ENCODE measurements at regions of chr16 and their contacts with region 1.

Region 1: GRCh38 chr16:47699106-47699505 is 238.0 kb downstream of the PHKB start:
- DNase-seq: no peak
- H3K4me3 ChIP-seq: no peak overlapping the region
- H3K27ac ChIP-seq: no peak overlapping the region
- H3K4me1 ChIP-seq: peaks cover 26% of the 10 kb centered on the region
- H3K27me3 ChIP-seq: no peaks in the 10 kb centered on the region
- CTCF ChIP-seq: no peak
- POLR2A ChIP-seq: no peak

Region 2: DNA sequence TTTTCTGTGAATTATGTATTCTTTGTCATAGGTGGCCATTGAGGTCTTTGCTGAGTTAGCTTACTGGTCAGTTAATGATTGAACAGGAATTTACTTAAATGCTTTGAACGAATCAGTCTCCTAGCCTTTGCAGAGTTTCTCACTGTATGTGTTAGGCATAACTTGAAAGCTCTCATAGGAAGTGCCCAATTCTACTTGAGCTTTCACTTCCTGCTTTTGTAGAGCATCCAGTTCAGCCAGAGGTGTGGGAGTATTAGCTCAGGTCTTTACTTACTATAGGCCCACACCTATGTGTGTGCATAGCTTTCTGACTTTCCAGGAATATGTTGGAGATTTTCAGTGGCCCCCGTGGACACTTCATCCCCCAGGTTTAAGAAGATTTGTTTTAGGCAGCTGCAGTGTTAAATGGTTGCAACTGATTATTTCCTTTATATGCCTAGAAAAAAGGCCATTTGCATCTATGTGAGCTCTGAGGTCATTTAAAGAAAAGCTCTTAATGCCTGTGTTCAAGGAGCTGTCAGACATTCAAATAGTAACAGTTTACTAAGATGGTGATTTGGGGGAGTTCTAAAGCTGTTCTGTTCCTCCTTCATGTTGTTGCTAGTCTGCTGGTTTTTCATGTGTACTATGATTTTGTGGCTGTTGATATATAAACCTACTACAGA is 175.6 kb before region 1 on chr16:
- CTCF ChIA-PET with region 1: no interaction called
- POLR2A ChIA-PET with region 1: no interaction called
- dilution Hi-C with region 1: no loop called
- intact Hi-C with region 1: loop called (anchors 5 kb)
- DNase-seq: peak; percentile 47
- H3K4me3 ChIP-seq: peak overlapping the region in 1 of 3 experiments; percentile 36
- H3K27ac ChIP-seq: peak overlapping the region; percentile 53
- H3K4me1 ChIP-seq: peaks cover 20% of the 10 kb centered on the region
- H3K27me3 ChIP-seq: no peaks in the 10 kb centered on the region
- CTCF ChIP-seq: no peak
- POLR2A ChIP-seq: no peak

Region 3: DNA sequence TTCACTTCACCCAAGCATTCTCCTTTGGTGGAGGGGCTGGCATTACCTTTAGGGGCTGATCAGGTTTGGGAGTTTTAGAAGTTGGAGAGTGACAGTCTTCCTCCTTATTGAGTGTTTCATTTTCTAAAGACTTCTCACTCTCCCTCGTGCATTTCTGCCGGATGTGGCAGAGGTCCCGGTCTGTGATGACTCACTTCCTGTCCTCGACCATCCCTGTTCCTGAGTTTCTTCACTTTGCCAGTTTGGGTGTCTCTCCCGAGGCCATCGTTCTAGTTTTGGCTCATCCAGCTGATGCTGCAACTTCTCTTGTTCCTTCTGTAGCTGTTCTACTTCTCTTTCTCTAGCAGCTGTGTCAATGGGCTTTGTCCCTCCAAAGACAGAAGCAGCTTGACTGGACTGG is 133.7 kb before region 1 on chr16:
- CTCF ChIA-PET with region 1: no interaction called
- POLR2A ChIA-PET with region 1: no interaction called
- dilution Hi-C with region 1: no loop called
- intact Hi-C with region 1: no loop called
- DNase-seq: peak; percentile 30
- H3K4me3 ChIP-seq: no peak overlapping the region
- H3K27ac ChIP-seq: no peak overlapping the region
- H3K4me1 ChIP-seq: peaks cover 10% of the 10 kb centered on the region
- H3K27me3 ChIP-seq: no peaks in the 10 kb centered on the region
- CTCF ChIP-seq: no peak
- POLR2A ChIP-seq: no peak

Region 4: DNA sequence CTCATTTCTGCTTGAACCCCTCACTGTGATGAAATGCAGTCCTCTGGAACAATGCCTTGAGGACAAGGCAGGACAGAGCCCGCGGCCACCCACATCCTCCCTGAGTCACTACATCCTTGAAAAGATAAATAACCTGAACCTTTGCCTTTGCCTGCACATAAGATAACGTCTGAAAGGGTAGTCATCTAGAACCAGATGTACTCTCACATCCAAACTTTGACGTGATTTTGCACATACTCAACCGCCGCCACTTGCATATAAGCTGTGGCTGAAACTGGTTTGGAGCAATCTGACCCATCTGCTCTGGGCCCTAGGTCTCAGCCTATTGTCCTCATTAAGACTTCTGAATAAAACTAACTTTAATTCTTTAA is 14.1 kb after region 1 on chr16:
- CTCF ChIA-PET with region 1: interaction called, 10 read pairs
- POLR2A ChIA-PET with region 1: no interaction called
- dilution Hi-C with region 1: no loop called
- intact Hi-C with region 1: no loop called
- DNase-seq: peak; percentile 60
- H3K4me3 ChIP-seq: no peak overlapping the region
- H3K27ac ChIP-seq: no peak overlapping the region
- H3K4me1 ChIP-seq: peaks cover 14% of the 10 kb centered on the region
- H3K27me3 ChIP-seq: no peaks in the 10 kb centered on the region
- CTCF ChIP-seq: no peak
- POLR2A ChIP-seq: no peak